Heart left ventricle (tissue), 16 donors: ENCODE measurements at regions of chr3 and their contacts with region 1.

Region 1: GRCh38 chr3:3170998-3171397 is 8.5 kb downstream of the CRBN start:
- DNase-seq: no peak
- ATAC-seq: peak in 1 of 4 donors; percentile 45
- H3K4me3 ChIP-seq: no peak overlapping the region
- H3K27ac ChIP-seq: peak overlapping the region in 2 of 12 donors; percentile 85 to 96
- H3K4me1 ChIP-seq: peaks cover 0 to 50% (median 14%) of the 10 kb centered on the region in 12 donors
- H3K27me3 ChIP-seq: no peaks in the 10 kb centered on the region
- CTCF ChIP-seq: peak in 11 of 12 donors; percentile 15 to 55 (median 39)
- POLR2A ChIP-seq: no peak

Region 2: DNA sequence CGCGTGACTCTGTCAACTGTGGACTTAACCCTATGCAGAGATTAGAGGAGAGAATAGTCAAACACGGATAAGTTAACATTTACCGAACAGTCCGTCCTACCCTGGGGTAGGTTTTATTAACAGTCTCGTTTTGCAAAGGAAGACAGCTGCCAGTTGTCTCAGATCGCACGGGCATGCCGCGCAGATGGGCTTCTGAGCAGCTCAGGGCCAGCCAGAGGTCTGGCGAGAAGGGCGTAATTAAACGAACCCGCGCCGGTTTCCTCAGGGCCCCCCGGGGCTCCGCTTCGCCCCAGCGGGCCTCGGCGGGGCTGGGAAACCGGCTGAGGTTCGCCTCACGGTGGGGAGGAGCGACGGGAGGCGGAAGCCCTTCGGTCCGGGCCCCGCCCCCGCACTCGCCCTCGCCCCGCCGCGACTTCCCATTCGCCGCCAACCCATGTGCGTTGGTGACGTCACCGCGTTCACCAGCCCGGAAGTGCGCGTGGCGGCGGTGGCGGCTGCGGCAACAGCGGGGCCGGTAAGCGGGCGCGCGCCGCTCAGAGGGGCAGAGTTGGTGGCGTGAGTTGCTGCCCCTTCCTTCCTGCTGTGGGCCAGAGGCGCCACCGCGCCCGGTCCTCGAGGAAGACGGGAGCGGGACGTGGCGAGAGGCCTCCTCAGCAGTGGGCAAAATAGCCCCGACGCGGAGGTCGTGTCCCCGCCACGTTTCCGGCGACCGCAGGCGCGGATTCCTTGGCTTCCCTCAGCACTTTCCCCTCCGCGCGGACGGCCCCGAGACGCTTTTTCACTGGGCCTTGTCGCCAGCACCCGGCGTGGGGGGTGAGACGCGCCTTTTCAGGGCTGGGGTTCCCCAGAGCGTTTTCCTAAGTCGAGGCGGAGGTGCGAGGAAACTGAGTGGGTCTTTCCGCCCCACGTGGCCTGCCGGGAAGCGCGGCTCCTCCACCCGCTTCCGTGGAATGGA is 44.2 kb before region 1 on chr3 and contains the start of gene TRNT1:
- intact Hi-C with region 1: loop called in 2 of 10 experiments (anchors 5 kb)
- DNase-seq: peak; percentile 97 to 99 (median 97)
- ATAC-seq: peak; percentile 98 to 99 (median 99)
- H3K4me3 ChIP-seq: peak within 1 kb of the TSS; percentile 47 to 98 (median 88)
- H3K27ac ChIP-seq: peak within 1 kb of the TSS; percentile 2 to 98 (median 92)
- H3K4me1 ChIP-seq: peaks cover 0 to 34% (median 15%) of the 10 kb centered on the region in 12 donors
- H3K27me3 ChIP-seq: no peaks in the 10 kb centered on the region
- CTCF ChIP-seq: peak in 2 of 12 donors; percentile 7 to 10
- POLR2A ChIP-seq: peak in 1 of 2 donors; percentile 86
- total RNA-seq, gene TRNT1: 5.4 to 14.7 (median 11.1) TPM